ENCODE measurements at regions of chr12 and their contacts with region 1.

Region 1: GRCh38 chr12:27710592-27711316 is at the start of gene MRPS35:
- DNase-seq: peak; percentile 88 to 95
- ATAC-seq: peak; percentile 97 to 99 (median 98)
- H3K4me3 ChIP-seq: peak within 1 kb of the TSS; percentile 97
- H3K4me3 Mint-ChIP-seq: peak within 1 kb of the TSS; percentile 95
- H3K27ac ChIP-seq: peak within 1 kb of the TSS; percentile 73
- H3K27ac Mint-ChIP-seq: peak within 1 kb of the TSS; percentile 90 to 94
- H3K4me1 ChIP-seq: peaks cover 12% of the 10 kb centered on the region
- H3K4me1 Mint-ChIP-seq: peaks cover 28 to 39% of the 10 kb centered on the region in 2 donors
- H3K27me3 ChIP-seq: peaks cover 2% of the 10 kb centered on the region
- H3K27me3 Mint-ChIP-seq: peaks cover 0 to 3% of the 10 kb centered on the region in 2 donors
- CTCF ChIP-seq: no peak
- total RNA-seq, gene MRPS35: 16.7 to 20.5 (median 18.6) TPM

Region 2: DNA sequence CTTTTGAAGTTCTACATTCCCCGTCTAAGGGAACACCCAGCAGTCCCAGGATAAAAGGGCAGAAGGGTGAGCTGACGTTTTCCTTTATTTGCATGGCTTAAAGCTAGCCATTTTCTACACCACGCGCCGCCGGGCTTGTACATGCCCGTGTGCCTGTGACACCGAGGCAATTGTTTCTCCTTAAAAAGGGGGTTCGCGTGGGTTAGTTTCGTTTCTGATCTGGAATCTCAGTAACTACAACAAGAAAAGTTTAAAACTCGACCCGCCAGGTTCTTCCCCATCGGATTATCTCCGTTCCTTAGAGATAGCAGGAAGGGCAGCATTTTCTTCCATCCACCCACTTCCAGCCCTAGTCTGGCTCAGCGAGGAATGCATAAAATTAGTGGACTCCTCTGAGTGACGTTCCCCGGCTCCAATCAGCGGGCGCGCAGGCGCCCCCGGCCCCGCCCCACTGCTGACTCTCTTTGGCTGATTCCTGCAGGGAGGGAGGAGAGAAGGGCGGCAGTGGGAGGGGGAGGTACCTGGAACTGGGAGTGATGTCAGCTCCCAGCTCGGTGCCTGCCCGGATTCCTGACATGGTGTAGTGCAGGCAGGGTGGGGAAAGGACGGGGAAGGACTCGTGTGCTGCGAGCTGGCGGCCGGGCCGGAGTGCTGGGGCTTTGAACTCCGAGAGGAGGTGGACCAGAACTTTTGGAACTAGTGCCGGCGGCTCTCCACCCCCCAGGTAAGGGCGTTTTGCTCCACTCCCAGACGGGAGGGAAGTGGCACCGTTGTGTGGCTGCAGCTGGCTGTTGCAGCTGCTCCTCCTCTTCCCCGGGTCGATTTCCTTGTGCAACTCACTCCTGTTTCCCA is 186.9 kb before region 1 on chr12 and contains the start of gene PPFIBP1:
- intact Hi-C with region 1: loop called (anchors 2 kb)
- DNase-seq: peak; percentile 82 to 95
- ATAC-seq: peak; percentile 96 to 98 (median 97)
- H3K4me3 ChIP-seq: peak within 1 kb of the TSS; percentile 55
- H3K4me3 Mint-ChIP-seq: peak within 1 kb of the TSS; percentile 97
- H3K27ac ChIP-seq: peak within 1 kb of the TSS; percentile 51
- H3K27ac Mint-ChIP-seq: peak within 1 kb of the TSS; percentile 85 to 88
- H3K4me1 ChIP-seq: peaks cover 16% of the 10 kb centered on the region
- H3K4me1 Mint-ChIP-seq: peaks cover 12 to 20% of the 10 kb centered on the region in 2 donors
- H3K27me3 ChIP-seq: no peaks in the 10 kb centered on the region
- H3K27me3 Mint-ChIP-seq: peaks cover 33 to 45% of the 10 kb centered on the region in 2 donors
- CTCF ChIP-seq: no peak
- total RNA-seq, gene PPFIBP1: 0.73 to 1.6 (median 1.4) TPM

Region 3: DNA sequence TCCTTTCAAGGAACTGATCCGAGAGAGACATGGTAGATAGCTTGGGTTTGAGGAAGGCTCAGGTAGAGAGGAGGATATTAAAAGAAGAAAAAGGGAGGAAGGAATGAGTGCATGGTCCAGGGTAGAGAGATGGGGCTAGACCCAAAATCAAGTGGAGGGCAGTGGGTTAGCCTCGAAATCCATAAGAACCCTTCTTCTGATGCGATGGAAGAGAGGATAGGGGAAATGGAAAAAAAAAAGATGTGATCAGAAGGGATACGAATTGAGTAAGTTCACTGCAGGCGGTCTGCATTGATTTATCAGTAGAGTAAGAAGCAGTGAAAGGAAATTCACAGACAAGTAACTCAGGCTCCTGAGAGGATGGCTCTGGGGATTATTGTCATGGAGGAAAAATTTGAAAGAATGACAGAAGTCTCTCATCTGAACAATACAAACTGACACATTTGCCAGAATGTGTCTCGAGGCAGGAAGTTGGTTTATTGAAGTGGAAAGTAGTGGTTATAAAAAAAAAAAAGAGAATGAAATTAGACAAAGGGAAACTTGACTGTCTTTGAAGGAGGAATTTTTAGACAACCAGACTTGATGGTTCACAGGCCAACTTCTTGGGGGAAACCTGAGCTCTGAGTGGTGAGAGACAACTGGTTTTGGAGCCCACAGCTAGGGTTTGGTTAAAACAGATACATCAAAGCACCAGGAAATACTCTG is 176.5 kb before region 1 on chr12:
- intact Hi-C with region 1: no loop called
- DNase-seq: peak in 1 of 2 donors; percentile 66
- ATAC-seq: peak; percentile 42 to 79 (median 46)
- H3K4me3 ChIP-seq: no peak overlapping the region
- H3K4me3 Mint-ChIP-seq: peak overlapping the region; percentile 43
- H3K27ac ChIP-seq: no peak overlapping the region
- H3K27ac Mint-ChIP-seq: peak overlapping the region; percentile 4 to 24
- H3K4me1 ChIP-seq: peaks cover 9% of the 10 kb centered on the region
- H3K4me1 Mint-ChIP-seq: peaks cover 17% of the 10 kb centered on the region in 2 donors
- H3K27me3 ChIP-seq: no peaks in the 10 kb centered on the region
- H3K27me3 Mint-ChIP-seq: peaks cover 7 to 12% of the 10 kb centered on the region in 2 donors
- CTCF ChIP-seq: no peak